ENCODE measurements at regions of chr3 and their contacts with region 1.

Region 1: DNA sequence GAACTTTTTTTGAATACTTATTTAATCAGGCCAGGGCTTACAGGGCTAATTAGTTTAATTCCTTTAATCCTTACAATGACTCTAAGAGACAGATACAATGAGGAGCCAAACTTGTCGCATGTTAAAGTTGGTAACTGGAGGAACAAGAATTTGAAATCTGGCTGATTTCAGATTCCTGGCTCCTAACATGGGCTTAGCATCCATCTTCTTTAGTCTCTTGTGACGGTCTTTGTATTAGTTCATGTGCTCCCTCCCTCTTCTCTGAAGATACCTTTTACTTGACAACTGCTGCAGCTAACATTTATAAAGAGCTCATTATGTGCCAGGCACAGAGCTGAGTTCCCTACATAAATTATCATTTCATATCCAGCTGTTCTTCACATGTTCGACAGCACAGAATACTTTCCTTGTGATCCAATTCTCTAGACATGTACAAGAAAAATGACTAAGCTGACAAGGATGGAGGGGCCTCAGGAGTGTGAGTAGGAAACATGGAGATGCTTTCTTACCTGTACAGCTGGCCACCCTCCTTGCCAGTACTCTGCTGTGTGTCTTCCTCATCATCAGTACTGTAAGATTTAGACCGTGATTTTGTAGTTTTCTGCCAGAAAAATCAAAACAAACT is 206.8 kb upstream of the STRIT1 start:
- DNase-seq: no peak
- H3K4me3 ChIP-seq: no peak overlapping the region
- H3K27ac ChIP-seq: no peak overlapping the region
- H3K4me1 ChIP-seq: no peaks in the 10 kb centered on the region
- H3K27me3 ChIP-seq: no peaks in the 10 kb centered on the region
- CTCF ChIP-seq: no peak
- POLR2A ChIP-seq: no peak

Region 2: GRCh38 chr3:155169197-155169596 is 331.1 kb before region 1 on chr3:
- intact Hi-C with region 1: no loop called
- DNase-seq: no peak
- H3K4me3 ChIP-seq: no peak overlapping the region
- H3K27ac ChIP-seq: no peak overlapping the region
- H3K4me1 ChIP-seq: no peaks in the 10 kb centered on the region
- H3K27me3 ChIP-seq: no peaks in the 10 kb centered on the region
- CTCF ChIP-seq: no peak
- POLR2A ChIP-seq: no peak

Region 3: GRCh38 chr3:155519078-155519477 is 18.8 kb after region 1 on chr3:
- intact Hi-C with region 1: loop called (anchors 2 kb)
- DNase-seq: no peak
- H3K4me3 ChIP-seq: no peak overlapping the region
- H3K27ac ChIP-seq: no peak overlapping the region
- H3K4me1 ChIP-seq: no peaks in the 10 kb centered on the region
- H3K27me3 ChIP-seq: no peaks in the 10 kb centered on the region
- CTCF ChIP-seq: no peak
- POLR2A ChIP-seq: no peak

Region 4: GRCh38 chr3:156317457-156318074 is 817.3 kb after region 1 on chr3:
- intact Hi-C with region 1: no loop called
- DNase-seq: no peak
- H3K4me3 ChIP-seq: no peak overlapping the region
- H3K27ac ChIP-seq: no peak overlapping the region
- H3K4me1 ChIP-seq: no peaks in the 10 kb centered on the region
- H3K27me3 ChIP-seq: no peaks in the 10 kb centered on the region
- CTCF ChIP-seq: no peak
- POLR2A ChIP-seq: no peak